Panc1 (cell line): ENCODE measurements at regions of chr20 and their contacts with region 1.

Region 1: DNA sequence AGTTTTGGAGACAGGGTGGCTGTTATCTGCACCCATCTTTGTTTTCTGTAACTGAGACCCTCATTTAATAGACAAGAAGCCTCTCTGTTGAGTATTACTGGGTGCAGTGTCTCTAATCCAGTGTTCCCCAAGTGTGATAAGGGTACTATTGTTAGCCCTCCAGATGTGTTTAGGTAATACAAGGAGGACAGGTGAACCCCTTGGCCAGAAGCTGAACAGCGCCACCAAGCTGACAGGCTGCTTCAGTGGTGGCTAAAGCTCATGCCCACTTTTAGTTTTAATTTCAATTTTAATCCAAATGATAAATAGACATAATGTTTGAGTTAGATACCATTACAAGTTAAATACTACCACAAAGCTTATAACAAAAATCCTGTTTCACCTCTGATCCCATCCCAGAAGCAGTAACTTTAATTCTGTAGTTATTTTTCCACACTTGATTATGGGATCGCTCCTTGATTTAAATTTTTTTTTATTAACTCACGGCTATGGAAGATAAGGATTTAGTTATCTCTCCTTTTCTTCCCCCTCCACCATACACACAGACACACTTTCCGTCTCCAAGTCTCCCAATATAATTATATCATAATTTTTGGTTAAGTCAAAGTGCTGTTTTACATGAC is 8.4 kb upstream of the STK35 start:
- DNase-seq: no peak
- ATAC-seq: peak; percentile 71; the same call in 1 of the 2 replicates
- H3K4me3 ChIP-seq: no peak overlapping the region
- H3K27ac ChIP-seq: no peak overlapping the region
- H3K4me1 ChIP-seq: no peaks in the 10 kb centered on the region
- H3K27me3 ChIP-seq: peaks cover 38% of the 10 kb centered on the region
- CTCF ChIP-seq: peak; percentile 80

Region 2: DNA sequence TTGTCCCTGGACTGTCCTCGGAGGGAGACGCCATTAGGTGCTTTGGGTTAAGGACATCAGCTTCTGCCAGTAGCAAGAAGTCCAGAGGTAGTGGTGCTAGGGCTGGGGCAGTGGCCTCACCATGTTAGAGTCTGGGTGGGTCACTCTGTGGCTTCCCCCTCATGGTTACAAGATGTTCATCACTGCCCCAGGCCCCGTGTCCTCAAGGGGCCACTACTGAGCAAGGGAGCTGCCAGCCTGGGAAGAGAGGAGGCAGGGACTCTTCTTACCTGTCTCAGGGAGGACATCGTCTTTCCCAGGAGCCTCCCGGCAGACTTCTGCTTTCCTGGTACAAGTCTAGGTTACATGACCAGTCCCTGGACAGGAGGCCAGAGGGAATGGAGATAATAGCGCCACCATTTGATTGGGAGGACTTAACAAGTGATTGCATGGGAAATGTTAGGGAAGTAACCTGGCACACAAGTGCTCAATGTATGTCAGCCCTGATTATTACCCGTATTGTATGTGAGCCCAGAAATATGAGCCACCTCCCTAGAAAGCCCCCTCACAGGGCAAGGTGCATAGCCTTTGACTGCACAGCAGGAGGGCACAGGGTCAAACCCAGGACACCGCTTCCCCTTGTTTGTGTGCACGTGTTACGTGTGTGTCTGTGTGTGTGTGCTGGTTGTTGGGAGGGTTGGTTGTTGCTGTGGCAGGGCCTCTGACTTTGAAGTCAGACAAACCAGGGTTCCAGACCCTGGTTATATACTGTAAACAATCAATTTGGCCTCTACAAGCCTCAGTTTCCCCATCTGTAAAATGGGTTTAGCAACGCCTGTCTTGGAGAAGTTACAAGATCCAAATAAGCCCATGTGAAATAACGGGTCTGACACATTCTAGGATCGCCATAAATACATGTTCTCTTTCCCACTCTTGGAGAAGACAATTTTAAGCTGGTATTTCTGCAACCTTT is 168.1 kb before region 1 on chr20:
- CTCF ChIA-PET with region 1: no interaction called
- POLR2A ChIA-PET with region 1: no interaction called
- in situ Hi-C with region 1: no loop called
- intact Hi-C with region 1: no loop called
- DNase-seq: no peak
- ATAC-seq: no peak
- H3K4me3 ChIP-seq: no peak overlapping the region
- H3K27ac ChIP-seq: no peak overlapping the region
- H3K4me1 ChIP-seq: no peaks in the 10 kb centered on the region
- H3K27me3 ChIP-seq: peaks cover under 1% of the 10 kb centered on the region; the same call in 1 of the 2 replicates
- CTCF ChIP-seq: no peak; the same call in 1 of the 2 replicates

Region 3: DNA sequence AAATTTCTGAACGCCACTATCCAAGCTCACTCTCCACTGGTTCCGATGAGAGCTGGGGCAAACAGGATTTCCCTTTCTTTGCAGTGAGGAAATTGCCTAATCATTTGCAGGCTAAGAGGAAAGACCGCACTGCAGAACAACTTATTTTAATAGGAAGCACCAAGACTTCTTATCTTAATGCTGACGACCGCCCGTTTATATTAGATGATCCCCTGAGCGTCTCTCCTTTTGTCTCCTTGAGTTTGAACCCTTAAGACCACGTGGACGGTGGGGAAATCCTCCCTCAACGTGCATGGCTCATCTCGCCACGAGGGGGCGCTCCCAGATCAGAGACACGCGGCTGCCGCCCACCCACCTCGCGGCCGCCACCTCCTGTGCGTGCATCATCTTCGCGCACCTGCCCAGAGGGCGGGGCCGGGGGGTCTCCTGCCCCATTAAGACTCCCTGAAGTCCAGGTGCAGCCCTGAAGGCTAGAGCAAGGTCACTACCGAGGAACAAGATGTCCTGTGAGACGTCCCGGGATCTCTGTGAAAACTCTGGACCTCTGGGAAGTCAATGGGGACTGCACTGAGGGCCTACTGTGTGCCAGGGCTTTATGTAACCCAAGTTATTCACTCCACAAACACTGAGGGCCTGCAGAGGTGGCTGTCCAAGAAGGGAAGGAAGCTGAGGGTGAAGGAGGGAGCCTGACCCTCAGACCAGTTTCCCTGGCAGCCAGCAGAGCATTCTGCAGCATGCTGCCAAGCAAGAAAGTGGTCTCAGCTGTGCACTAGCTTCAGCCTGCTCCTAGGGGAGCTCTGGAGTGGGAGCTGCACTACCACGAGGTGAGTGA is 127.5 kb before region 1 on chr20:
- CTCF ChIA-PET with region 1: interaction called, 12 read pairs
- POLR2A ChIA-PET with region 1: no interaction called
- in situ Hi-C with region 1: no loop called
- intact Hi-C with region 1: loop called (anchors 5 kb)
- DNase-seq: peak; percentile 18
- ATAC-seq: peak; percentile 94
- H3K4me3 ChIP-seq: no peak overlapping the region; a peak in 1 of 4 replicates
- H3K27ac ChIP-seq: no peak overlapping the region
- H3K4me1 ChIP-seq: no peaks in the 10 kb centered on the region
- H3K27me3 ChIP-seq: peaks cover 16% of the 10 kb centered on the region
- CTCF ChIP-seq: peak; percentile 97

Region 4: GRCh38 chr20:2032155-2032554 is 61.1 kb before region 1 on chr20:
- CTCF ChIA-PET with region 1: no interaction called
- POLR2A ChIA-PET with region 1: no interaction called
- in situ Hi-C with region 1: no loop called
- intact Hi-C with region 1: no loop called
- DNase-seq: no peak
- ATAC-seq: no peak
- H3K4me3 ChIP-seq: no peak overlapping the region
- H3K27ac ChIP-seq: no peak overlapping the region
- H3K4me1 ChIP-seq: no peaks in the 10 kb centered on the region
- H3K27me3 ChIP-seq: peaks cover 26% of the 10 kb centered on the region
- CTCF ChIP-seq: no peak

Region 5: DNA sequence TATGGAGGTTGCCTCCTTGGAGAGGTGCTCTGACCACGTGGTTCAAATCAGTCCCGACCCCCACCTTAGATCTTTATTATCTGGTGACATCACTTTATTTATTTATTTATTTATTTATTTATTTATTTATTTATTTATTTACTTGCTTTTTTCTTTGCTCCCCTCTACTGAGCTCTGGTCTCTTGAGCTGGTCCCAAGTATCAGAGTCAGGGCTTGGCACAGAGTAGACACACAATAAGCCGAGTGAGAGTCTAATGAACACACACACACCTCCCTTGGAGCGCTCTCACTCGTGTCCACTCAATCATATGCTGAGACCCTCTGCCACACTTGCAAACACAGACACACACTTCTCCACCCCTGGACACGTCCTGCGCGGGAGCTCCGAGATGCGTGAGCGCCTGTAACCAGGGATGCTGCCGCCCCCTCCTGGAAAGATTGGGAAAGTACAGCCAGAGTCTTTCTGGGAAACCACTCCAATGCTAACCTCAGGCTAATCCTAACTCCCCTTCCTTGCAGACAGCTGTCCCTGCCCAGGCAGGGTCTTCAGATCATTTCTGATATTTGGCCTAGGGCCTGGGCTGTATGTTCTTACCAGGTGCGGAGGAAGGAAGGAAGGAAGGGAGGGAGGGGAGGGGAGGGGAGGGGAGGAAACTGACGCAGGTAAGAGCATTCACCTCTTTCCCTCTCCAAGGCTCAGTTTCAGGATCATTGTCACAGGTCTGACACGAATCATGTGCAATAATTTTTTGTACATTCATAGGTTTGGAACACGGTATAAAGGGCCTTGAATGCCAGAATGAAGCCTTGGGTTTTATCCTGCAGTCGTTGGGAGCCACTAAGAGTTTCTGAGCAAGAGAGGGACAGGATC is 79.3 kb after region 1 on chr20:
- CTCF ChIA-PET with region 1: no interaction called
- POLR2A ChIA-PET with region 1: no interaction called
- in situ Hi-C with region 1: no loop called
- intact Hi-C with region 1: no loop called
- DNase-seq: peak; percentile 36
- ATAC-seq: peak; percentile 82
- H3K4me3 ChIP-seq: peak overlapping the region in 1 of 2 experiments; percentile 6; a peak in 1 of 4 replicates
- H3K27ac ChIP-seq: no peak overlapping the region
- H3K4me1 ChIP-seq: 0 out of 2 replicates have a peak, but pooled peaks cover 4% of the 10 kb centered on the region
- H3K27me3 ChIP-seq: no peaks in the 10 kb centered on the region; the same call in 1 of the 2 replicates
- CTCF ChIP-seq: peak; percentile 93